Ovary (tissue), 10 donors: ENCODE measurements at regions of chr11 and their contacts with region 1.

Region 1: DNA sequence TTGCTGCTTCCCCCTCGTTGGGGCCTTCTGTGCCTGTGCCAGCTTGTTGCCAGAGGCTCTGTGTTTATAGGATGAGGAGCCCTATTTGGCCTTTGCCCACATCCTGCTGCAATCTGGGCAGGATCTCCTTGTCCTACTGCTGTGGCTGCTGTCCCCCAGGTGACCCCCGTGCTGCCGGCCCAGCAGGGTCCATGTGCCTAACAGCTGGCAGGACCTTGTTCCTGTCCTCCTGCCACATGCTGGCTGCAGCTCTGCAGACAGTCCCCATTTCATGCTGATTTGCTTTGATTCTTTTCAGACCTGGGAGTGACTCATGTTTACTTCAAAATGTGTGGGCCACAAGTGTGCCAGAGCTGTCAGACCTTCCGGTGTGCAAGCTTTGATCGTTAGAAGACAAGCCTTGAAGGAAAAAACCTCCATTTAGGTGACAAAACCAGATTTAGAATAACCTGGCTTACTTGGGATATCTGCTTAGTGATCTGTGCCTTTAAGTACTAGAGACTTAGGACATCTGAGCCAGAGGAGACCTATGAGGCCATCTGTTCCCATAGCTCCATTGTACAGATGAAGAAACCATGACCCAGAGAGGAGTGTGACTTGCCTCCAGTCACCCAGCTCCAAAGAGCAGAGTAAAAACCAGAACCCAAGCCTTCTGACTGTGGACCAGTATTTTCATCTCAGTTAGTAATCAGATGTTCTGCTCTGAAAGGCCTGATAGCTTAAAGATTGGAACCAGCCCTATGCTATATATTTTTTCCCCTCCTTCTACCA is 11.1 kb downstream of the NAV2 start:
- DNase-seq: no peak
- H3K4me3 ChIP-seq: no peak overlapping the region
- H3K27ac ChIP-seq: no peak overlapping the region
- H3K4me1 ChIP-seq: no peaks in the 10 kb centered on the region
- H3K27me3 ChIP-seq: no peaks in the 10 kb centered on the region
- CTCF ChIP-seq: no peak
- EP300 ChIP-seq: no peak
- POLR2A ChIP-seq: no peak

Region 2: DNA sequence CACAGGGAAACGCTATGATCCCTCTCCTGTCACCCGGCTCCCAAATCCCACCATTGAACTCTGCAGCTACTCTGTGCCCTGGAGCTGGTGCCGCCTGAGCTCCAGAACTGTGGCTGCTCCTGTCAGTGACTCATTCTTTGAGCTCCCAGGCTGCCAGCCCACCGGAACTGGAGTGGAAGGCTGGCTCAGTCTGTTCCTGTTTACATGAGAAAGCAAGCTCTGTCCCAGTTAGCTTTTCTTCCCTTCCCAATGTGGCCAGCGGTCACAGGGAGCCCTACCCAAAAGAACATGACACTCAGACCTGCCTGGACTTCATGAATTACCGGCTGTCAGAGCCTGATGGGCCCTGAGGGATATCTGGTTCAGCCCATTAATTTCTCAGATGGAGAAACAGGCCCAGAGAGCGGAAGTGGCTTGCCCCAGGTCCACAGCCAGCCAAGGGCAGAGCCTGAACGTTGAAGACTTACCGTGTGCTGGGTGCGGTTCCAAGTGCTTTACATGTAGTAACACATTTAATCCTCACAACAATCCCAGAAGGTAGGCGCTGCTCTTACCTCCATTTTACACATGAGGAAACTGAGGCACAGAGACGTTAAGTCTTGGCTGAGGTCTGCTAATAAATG is 973.9 kb before region 1 on chr11:
- intact Hi-C with region 1: loop called in 1 of 4 experiments (anchors 10 kb)
- DNase-seq: peak in 2 of 5 donors; percentile 40 to 60
- H3K4me3 ChIP-seq: no peak overlapping the region
- H3K27ac ChIP-seq: no peak overlapping the region
- H3K4me1 ChIP-seq: no peaks in the 10 kb centered on the region
- H3K27me3 ChIP-seq: no peaks in the 10 kb centered on the region
- CTCF ChIP-seq: no peak
- EP300 ChIP-seq: no peak
- POLR2A ChIP-seq: no peak

Region 3: GRCh38 chr11:19673924-19674729 is 49.6 kb before region 1 on chr11:
- intact Hi-C with region 1: no loop called
- DNase-seq: peak; percentile 16 to 67 (median 55)
- H3K4me3 ChIP-seq: no peak overlapping the region
- H3K27ac ChIP-seq: no peak overlapping the region
- H3K4me1 ChIP-seq: no peaks in the 10 kb centered on the region
- H3K27me3 ChIP-seq: no peaks in the 10 kb centered on the region
- CTCF ChIP-seq: no peak
- EP300 ChIP-seq: no peak
- POLR2A ChIP-seq: no peak

Region 4: GRCh38 chr11:19907008-19907579 is 183.3 kb after region 1 on chr11:
- intact Hi-C with region 1: no loop called
- DNase-seq: no peak
- H3K4me3 ChIP-seq: no peak overlapping the region
- H3K27ac ChIP-seq: no peak overlapping the region
- H3K4me1 ChIP-seq: peaks cover 16% of the 10 kb centered on the region
- H3K27me3 ChIP-seq: no peaks in the 10 kb centered on the region
- CTCF ChIP-seq: no peak
- EP300 ChIP-seq: no peak
- POLR2A ChIP-seq: no peak